ENCODE measurements at regions of chr9 and their contacts with region 1.

Region 1: DNA sequence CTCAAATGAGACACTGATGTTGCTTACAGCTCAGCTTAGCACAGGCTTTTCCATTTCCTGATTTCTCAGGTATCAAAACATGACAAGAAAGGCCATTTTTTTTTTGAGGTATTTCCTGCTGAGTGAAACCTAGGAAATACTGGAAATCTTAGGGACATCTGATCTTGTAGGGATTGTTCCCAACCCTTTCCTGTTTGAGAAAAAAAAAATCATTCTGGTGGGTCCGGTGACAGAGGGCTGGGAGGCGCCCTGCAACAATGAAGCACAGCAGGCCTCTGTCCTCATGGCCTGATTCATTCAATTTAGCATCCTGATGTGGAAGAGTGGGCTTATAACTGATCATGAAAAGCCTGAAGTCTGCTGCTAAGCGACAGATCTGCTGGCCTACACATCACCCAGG is 3.0 kb upstream of the C9orf153 start:
- DNase-seq: no peak
- ATAC-seq: no peak
- H3K4me3 ChIP-seq: no peak overlapping the region
- H3K27ac ChIP-seq: no peak overlapping the region
- H3K4me1 ChIP-seq: no peaks in the 10 kb centered on the region
- H3K27me3 ChIP-seq: no peaks in the 10 kb centered on the region
- CTCF ChIP-seq: no peak

Region 2: GRCh38 chr9:86281577-86282076 is 19.2 kb after region 1 on chr9:
- CTCF ChIA-PET with region 1: no interaction called
- POLR2A ChIA-PET with region 1: no interaction called
- in situ Hi-C with region 1: no loop called
- intact Hi-C with region 1: loop called (anchors 2 kb)
- DNase-seq: no peak
- ATAC-seq: peak; percentile 60
- H3K4me3 ChIP-seq: peak overlapping the region; percentile 78 to 92
- H3K27ac ChIP-seq: peak overlapping the region; percentile 87
- H3K4me1 ChIP-seq: peaks cover 4% of the 10 kb centered on the region; the same call in 1 of the 2 replicates
- H3K27me3 ChIP-seq: no peaks in the 10 kb centered on the region
- CTCF ChIP-seq: no peak

Measured in Panc1 (cell line).